IMR-90 (cell line): ENCODE measurements at regions of chr5 and their contacts with region 1.

Region 1: GRCh38 chr5:31329715-31330114 is 136.2 kb downstream of the CDH6 start:
- DNase-seq: peak; percentile 5
- ATAC-seq: peak; percentile 45; the same call in 1 of the 2 replicates
- H3K4me3 ChIP-seq: no peak overlapping the region
- H3K27ac ChIP-seq: no peak overlapping the region
- H3K4me1 ChIP-seq: no peaks in the 10 kb centered on the region; the same call in 1 of the 2 replicates
- H3K27me3 ChIP-seq: no peaks in the 10 kb centered on the region
- CTCF ChIP-seq: no peak
- POLR2A ChIP-seq: no peak
- RAD21 ChIP-seq: no peak; the same call in 1 of the 2 replicates

Region 2: GRCh38 chr5:30050056-30050815 is 1279.5 kb before region 1 on chr5:
- CTCF ChIA-PET with region 1: no interaction called
- POLR2A ChIA-PET with region 1: no interaction called
- dilution Hi-C with region 1: no loop called
- in situ Hi-C with region 1: no loop called
- intact Hi-C with region 1: loop called (anchors 5 kb)
- DNase-seq: no peak
- ATAC-seq: no peak
- H3K4me3 ChIP-seq: no peak overlapping the region
- H3K27ac ChIP-seq: no peak overlapping the region
- H3K4me1 ChIP-seq: no peaks in the 10 kb centered on the region
- H3K27me3 ChIP-seq: no peaks in the 10 kb centered on the region
- CTCF ChIP-seq: no peak
- POLR2A ChIP-seq: no peak
- RAD21 ChIP-seq: no peak

Region 3: DNA sequence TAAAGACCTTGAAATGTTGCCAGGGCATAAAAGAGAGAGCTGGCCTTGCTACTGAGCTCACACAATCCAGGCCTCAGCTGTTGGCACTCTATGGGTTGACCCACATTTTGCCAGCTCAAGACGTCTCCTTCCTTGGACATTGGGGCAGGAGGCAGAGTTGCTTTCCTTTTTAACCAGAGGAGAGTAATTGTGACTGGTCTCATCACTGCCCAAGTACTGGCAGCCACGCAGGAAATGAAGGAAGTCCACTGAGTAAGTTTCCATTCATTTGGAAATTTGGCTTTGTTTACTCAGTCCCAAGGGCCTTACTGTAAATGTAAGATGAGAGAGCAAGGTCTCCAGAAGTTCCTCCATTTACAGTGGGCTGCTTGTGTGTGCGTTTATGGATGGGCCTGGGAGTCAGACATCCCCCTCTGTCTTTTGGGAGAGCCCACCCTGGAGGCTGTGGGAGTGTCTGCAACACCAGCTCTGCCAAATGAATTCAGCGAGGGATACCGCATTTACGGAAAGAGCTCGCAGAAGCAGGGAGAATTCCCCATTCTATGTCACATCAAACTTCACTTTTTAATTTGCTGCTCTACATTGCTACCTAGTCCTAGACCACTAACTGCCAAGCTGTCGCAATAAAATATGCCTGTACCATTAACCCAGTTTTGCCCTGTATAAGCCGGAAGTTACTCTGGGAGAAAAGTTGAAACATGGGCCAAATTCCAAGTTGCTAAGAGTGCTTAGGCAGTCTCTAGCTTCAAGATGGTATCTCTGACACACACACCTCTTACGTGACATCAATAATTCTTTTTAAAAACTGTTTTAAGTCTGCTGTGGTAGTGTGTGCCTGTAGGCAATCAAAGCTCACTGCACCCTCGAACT is 284.7 kb after region 1 on chr5:
- CTCF ChIA-PET with region 1: no interaction called
- POLR2A ChIA-PET with region 1: no interaction called
- dilution Hi-C with region 1: no loop called
- in situ Hi-C with region 1: no loop called
- intact Hi-C with region 1: no loop called
- DNase-seq: no peak
- ATAC-seq: no peak
- H3K4me3 ChIP-seq: no peak overlapping the region
- H3K27ac ChIP-seq: no peak overlapping the region
- H3K4me1 ChIP-seq: no peaks in the 10 kb centered on the region
- H3K27me3 ChIP-seq: peaks cover 10% of the 10 kb centered on the region
- CTCF ChIP-seq: no peak
- POLR2A ChIP-seq: no peak
- RAD21 ChIP-seq: no peak

Region 4: DNA sequence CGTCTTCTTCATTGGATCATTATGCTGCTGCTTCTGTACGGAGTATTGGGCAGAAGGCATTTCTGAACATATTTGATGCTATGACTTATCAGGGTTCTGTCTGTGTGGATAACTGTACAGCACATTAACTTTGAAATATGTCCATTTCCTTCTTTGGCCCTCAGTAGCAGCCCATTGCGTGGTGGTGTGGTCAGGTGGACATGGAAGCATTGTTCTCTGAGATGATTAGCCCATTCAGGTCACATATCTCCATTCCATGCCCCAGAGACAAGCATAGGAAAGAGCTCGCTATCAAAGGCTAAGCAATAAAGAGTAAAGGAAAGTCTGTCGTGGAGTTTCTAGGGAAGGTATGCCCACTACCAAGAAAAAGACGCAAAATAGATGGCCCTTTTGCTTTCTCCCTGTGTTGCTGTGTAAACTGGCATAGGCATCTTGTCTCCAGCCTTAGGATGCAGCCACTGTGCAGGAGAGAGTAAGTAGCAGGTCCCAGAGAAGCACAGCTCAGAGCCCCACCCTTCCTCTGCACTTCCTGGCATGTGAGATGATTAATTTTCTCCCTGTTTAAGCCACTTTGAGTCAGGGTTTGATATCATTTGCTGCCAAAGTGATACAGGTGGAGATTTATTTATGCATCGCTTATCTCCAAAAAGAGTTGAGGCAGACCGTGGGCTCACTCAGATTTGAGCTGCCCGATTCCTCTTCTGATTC is 531.2 kb after region 1 on chr5:
- CTCF ChIA-PET with region 1: no interaction called
- POLR2A ChIA-PET with region 1: no interaction called
- dilution Hi-C with region 1: no loop called
- in situ Hi-C with region 1: no loop called
- intact Hi-C with region 1: no loop called
- DNase-seq: no peak
- ATAC-seq: no peak
- H3K4me3 ChIP-seq: no peak overlapping the region
- H3K27ac ChIP-seq: no peak overlapping the region
- H3K4me1 ChIP-seq: no peaks in the 10 kb centered on the region
- H3K27me3 ChIP-seq: peaks cover 18% of the 10 kb centered on the region
- CTCF ChIP-seq: no peak
- POLR2A ChIP-seq: no peak
- RAD21 ChIP-seq: no peak